CD14-positive monocyte (primary cell): ENCODE measurements at regions of chr7 and their contacts with region 1.

Region 1: GRCh38 chr7:73468097-73468496 is 34.5 kb downstream of the FZD9 start:
- DNase-seq: no peak
- H3K4me3 ChIP-seq: no peak overlapping the region
- H3K4me3 Mint-ChIP-seq: no peak overlapping the region
- H3K27ac ChIP-seq: no peak overlapping the region
- H3K27ac Mint-ChIP-seq: no peak overlapping the region
- H3K4me1 ChIP-seq: no peaks in the 10 kb centered on the region
- H3K4me1 Mint-ChIP-seq: no peaks in the 10 kb centered on the region
- H3K27me3 ChIP-seq: no peaks in the 10 kb centered on the region
- H3K27me3 Mint-ChIP-seq: no peaks in the 10 kb centered on the region
- CTCF ChIP-seq: no peak

Region 2: GRCh38 chr7:73376671-73377412 is 91.3 kb before region 1 on chr7:
- intact Hi-C with region 1: no loop called
- DNase-seq: no peak
- H3K4me3 ChIP-seq: no peak overlapping the region
- H3K4me3 Mint-ChIP-seq: peak overlapping the region in 1 of 2 donors; percentile 85
- H3K27ac ChIP-seq: no peak overlapping the region
- H3K27ac Mint-ChIP-seq: no peak overlapping the region
- H3K4me1 ChIP-seq: peaks cover 0 to 8% of the 10 kb centered on the region in 2 donors
- H3K4me1 Mint-ChIP-seq: peaks cover 17% of the 10 kb centered on the region
- H3K27me3 ChIP-seq: peaks cover 0 to 23% of the 10 kb centered on the region in 2 donors
- H3K27me3 Mint-ChIP-seq: peaks cover 27 to 31% (median 30%) of the 10 kb centered on the region in 3 donors
- CTCF ChIP-seq: no peak

Region 3: GRCh38 chr7:73533742-73534141 is 65.6 kb after region 1 on chr7:
- intact Hi-C with region 1: loop called in 1 of 2 experiments (anchors 10 kb)
- DNase-seq: no peak
- H3K4me3 ChIP-seq: no peak overlapping the region
- H3K4me3 Mint-ChIP-seq: no peak overlapping the region
- H3K27ac ChIP-seq: no peak overlapping the region
- H3K27ac Mint-ChIP-seq: no peak overlapping the region
- H3K4me1 ChIP-seq: no peaks in the 10 kb centered on the region
- H3K4me1 Mint-ChIP-seq: peaks cover 5% of the 10 kb centered on the region
- H3K27me3 ChIP-seq: no peaks in the 10 kb centered on the region
- H3K27me3 Mint-ChIP-seq: no peaks in the 10 kb centered on the region
- CTCF ChIP-seq: no peak